ENCODE measurements at regions of chr2 and their contacts with region 1.

Region 1: GRCh38 chr2:12317814-12318426 is 398.8 kb upstream of the TRIB2 start:
- DNase-seq: peak; percentile 78
- H3K4me3 ChIP-seq: no peak overlapping the region
- CTCF ChIP-seq: no peak

Region 2: GRCh38 chr2:12155303-12156051 is 162.4 kb before region 1 on chr2:
- CTCF ChIA-PET with region 1: no interaction called
- POLR2A ChIA-PET with region 1: no interaction called
- DNase-seq: no peak
- H3K4me3 ChIP-seq: no peak overlapping the region
- CTCF ChIP-seq: no peak

Region 3: GRCh38 chr2:12376025-12376424 is 58.1 kb after region 1 on chr2:
- CTCF ChIA-PET with region 1: no interaction called
- POLR2A ChIA-PET with region 1: no interaction called
- DNase-seq: no peak
- H3K4me3 ChIP-seq: no peak overlapping the region
- CTCF ChIP-seq: no peak

Region 4: DNA sequence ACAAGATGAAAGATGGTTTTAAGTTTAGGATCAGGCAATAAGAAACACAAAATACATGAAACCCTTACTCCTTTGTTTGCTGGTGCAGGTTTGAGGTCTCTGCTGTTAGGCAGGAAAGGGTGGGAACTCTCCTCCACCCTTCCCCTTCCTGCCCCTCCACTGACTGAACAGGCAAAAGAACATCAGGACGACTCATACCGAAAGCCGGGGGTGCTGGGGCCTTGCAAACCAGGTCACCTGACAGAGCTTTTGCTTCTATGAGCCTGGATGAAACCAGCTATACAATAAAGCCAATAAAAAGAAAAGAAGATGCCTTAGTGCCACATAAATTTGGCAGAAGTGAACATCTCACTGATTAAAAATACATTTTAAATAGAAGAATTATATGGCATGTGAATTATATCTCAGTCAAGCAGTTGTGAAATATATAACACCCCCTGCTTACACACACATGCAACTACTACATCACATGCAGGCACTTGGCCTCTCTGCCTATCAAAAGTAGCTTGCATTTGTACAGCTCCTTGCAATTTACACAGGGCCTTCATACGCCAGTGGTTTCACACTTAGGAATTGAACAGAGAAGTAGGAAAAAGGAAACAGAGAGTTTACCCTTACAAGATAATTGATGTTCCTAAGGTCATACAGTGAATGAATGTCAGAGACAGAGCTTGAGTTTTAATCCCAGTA is 183.7 kb after region 1 on chr2:
- CTCF ChIA-PET with region 1: no interaction called
- POLR2A ChIA-PET with region 1: no interaction called
- DNase-seq: no peak
- H3K4me3 ChIP-seq: no peak overlapping the region
- CTCF ChIP-seq: no peak

Region 5: GRCh38 chr2:12534646-12535263 is 216.8 kb after region 1 on chr2:
- CTCF ChIA-PET with region 1: no interaction called
- POLR2A ChIA-PET with region 1: interaction called, 14 read pairs
- DNase-seq: peak; percentile 98
- H3K4me3 ChIP-seq: peak overlapping the region; percentile 19; the same call in 1 of the 2 replicates
- CTCF ChIP-seq: no peak

Measured in AG04449 (cell line).